CD14-positive monocyte (primary cell): ENCODE measurements at regions of chrX and their contacts with region 1.

Region 1: DNA sequence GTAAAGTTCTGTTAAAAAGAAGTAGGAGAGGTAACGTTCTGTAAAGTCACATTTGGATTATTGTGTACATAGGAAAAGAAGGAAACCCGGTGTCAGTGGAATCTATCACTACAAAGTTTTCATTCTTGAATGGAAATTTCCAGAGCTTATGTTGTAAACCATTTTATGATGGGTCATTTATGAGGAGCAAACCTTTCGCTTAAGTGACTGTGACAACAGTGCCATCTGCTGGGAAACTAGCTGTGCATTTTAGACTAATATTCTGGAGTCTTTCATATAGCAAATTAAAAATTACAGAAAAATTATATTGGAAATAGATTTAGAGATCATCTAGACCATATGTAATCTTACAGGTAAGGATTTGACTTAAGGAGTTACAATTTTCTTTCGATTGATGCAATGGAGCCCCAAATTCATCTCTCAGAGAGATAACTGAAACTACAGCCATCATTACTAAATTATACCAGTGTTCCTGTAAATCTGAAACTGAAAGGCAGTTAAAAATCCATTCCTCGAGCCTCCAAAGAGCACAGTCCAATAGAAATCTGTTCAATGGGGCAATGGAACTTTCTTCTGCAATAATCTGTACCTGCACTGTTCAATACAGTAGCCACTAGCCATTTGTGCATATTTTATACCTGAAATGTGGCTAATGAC is 26.9 kb downstream of the ASB9 start:
- DNase-seq: peak; percentile 10 to 33 (median 31)
- H3K4me3 ChIP-seq: no peak overlapping the region
- H3K4me3 Mint-ChIP-seq: no peak overlapping the region
- H3K27ac ChIP-seq: no peak overlapping the region
- H3K27ac Mint-ChIP-seq: no peak overlapping the region
- H3K4me1 ChIP-seq: no peaks in the 10 kb centered on the region
- H3K4me1 Mint-ChIP-seq: no peaks in the 10 kb centered on the region
- H3K27me3 ChIP-seq: no peaks in the 10 kb centered on the region
- H3K27me3 Mint-ChIP-seq: peaks cover 0 to 13% (median 0%) of the 10 kb centered on the region in 3 donors
- CTCF ChIP-seq: peak; percentile 65

Region 2: GRCh38 chrX:14039344-14039743 is 1203.7 kb before region 1 on chrX:
- intact Hi-C with region 1: loop called in 1 of 2 experiments (anchors 5 kb)
- DNase-seq: peak; percentile 64 to 78 (median 70)
- H3K4me3 ChIP-seq: no peak overlapping the region
- H3K4me3 Mint-ChIP-seq: no peak overlapping the region
- H3K27ac ChIP-seq: no peak overlapping the region
- H3K27ac Mint-ChIP-seq: peak overlapping the region in 1 of 7 donors; percentile 4
- H3K4me1 ChIP-seq: peaks cover 6 to 11% of the 10 kb centered on the region in 2 donors
- H3K4me1 Mint-ChIP-seq: peaks cover 9% of the 10 kb centered on the region
- H3K27me3 ChIP-seq: peaks cover 0 to 6% of the 10 kb centered on the region in 2 donors
- H3K27me3 Mint-ChIP-seq: peaks cover 0 to 9% (median 0%) of the 10 kb centered on the region in 3 donors
- CTCF ChIP-seq: peak; percentile 78

Region 3: GRCh38 chrX:14095702-14096101 is 1147.3 kb before region 1 on chrX:
- intact Hi-C with region 1: loop called in 1 of 2 experiments (anchors 10 kb)
- DNase-seq: peak; percentile 5 to 22 (median 22)
- H3K4me3 ChIP-seq: no peak overlapping the region
- H3K4me3 Mint-ChIP-seq: no peak overlapping the region
- H3K27ac ChIP-seq: no peak overlapping the region
- H3K27ac Mint-ChIP-seq: no peak overlapping the region
- H3K4me1 ChIP-seq: no peaks in the 10 kb centered on the region
- H3K4me1 Mint-ChIP-seq: peaks cover 3% of the 10 kb centered on the region
- H3K27me3 ChIP-seq: peaks cover 0 to 3% of the 10 kb centered on the region in 2 donors
- H3K27me3 Mint-ChIP-seq: peaks cover 0 to 1% (median 0%) of the 10 kb centered on the region in 3 donors
- CTCF ChIP-seq: peak; percentile 58